ENCODE measurements at regions of chr1 and their contacts with region 1.

Region 1: DNA sequence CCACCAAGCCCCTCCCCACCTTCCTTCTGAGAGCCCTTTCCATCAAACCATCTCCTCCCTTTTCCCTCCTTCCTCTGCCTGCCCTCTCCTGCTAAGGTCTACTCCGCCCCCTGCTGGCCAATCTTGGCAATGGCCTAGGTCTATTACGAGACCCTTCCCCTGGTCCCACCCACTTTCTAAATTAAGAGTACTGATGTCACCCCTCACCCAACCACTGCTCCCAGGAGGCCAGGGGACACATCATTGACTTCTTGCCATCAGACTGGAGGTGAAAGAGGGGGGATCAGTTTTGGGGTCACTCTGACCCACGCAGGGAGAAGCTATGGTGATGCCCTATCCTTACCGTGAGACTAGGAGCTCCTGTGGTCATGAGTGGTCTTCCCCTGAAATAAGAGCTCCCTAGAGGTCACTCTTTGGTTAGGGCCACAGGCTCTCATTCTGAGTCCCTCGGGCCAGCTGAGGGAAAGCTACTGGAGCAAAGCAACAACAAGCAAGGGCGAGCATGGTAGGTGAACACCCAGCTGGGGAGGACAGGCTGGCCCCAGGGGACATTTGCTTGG is 34.6 kb upstream of the S100A7 start:
- DNase-seq: peak; percentile 79
- H3K4me3 ChIP-seq: no peak overlapping the region
- H3K27ac ChIP-seq: no peak overlapping the region
- H3K4me1 ChIP-seq: peaks cover 9% of the 10 kb centered on the region
- H3K27me3 ChIP-seq: peaks cover 12% of the 10 kb centered on the region
- CTCF ChIP-seq: peak; percentile 94

Region 2: DNA sequence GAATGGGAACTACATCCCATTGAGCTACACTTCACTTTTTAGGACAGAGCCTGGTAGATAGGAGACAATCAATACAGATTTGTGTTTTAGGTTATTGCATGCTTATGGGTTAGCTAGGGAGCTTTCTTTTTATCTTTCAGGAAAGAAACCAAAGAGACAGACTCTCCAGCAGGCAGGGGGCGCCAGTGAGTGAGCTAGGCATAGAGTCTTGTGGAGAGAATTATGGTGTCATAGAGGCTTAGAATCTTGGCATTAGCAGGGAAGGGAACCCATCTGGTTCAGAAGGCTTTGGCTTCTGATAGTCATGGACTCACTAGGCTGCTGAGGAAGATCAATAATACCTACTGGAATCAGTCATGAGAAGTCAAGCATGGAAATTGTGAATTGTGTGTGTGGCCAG is 617.0 kb before region 1 on chr1 and contains the start of gene SMCP:
- CTCF ChIA-PET with region 1: no interaction called
- POLR2A ChIA-PET with region 1: no interaction called
- intact Hi-C with region 1: no loop called
- DNase-seq: peak; percentile 46
- H3K4me3 ChIP-seq: no peak within 1 kb of the TSS
- H3K27ac ChIP-seq: no peak within 1 kb of the TSS
- H3K4me1 ChIP-seq: no peaks in the 10 kb centered on the region
- H3K27me3 ChIP-seq: no peaks in the 10 kb centered on the region
- CTCF ChIP-seq: peak; percentile 60
- total RNA-seq, gene SMCP: not detected in 2 replicates

Region 3: DNA sequence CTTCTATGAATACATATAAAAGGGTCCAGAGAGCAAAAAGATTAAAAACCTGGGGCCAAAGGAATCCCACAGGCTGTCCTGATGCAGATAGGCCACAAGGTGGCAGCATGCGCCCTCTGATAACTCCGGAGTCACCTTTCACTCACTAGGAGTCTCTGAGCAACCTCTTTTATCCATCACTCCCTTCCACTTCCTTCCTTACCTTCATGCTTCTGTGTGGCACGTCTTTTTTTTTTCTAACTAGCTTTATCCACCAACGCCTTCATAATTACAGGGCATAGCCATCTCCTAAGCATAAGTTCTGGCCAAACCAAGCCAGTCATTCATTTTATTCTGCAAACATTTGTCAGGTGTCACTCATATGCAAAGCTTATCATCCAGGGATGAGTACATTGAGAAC is 142.5 kb before region 1 on chr1:
- CTCF ChIA-PET with region 1: interaction called, 20 read pairs
- POLR2A ChIA-PET with region 1: no interaction called
- intact Hi-C with region 1: loop called (anchors 1 kb)
- DNase-seq: peak; percentile 72
- H3K4me3 ChIP-seq: no peak overlapping the region
- H3K27ac ChIP-seq: no peak overlapping the region
- H3K4me1 ChIP-seq: no peaks in the 10 kb centered on the region
- H3K27me3 ChIP-seq: peaks cover 53% of the 10 kb centered on the region
- CTCF ChIP-seq: peak; percentile 94

Region 4: DNA sequence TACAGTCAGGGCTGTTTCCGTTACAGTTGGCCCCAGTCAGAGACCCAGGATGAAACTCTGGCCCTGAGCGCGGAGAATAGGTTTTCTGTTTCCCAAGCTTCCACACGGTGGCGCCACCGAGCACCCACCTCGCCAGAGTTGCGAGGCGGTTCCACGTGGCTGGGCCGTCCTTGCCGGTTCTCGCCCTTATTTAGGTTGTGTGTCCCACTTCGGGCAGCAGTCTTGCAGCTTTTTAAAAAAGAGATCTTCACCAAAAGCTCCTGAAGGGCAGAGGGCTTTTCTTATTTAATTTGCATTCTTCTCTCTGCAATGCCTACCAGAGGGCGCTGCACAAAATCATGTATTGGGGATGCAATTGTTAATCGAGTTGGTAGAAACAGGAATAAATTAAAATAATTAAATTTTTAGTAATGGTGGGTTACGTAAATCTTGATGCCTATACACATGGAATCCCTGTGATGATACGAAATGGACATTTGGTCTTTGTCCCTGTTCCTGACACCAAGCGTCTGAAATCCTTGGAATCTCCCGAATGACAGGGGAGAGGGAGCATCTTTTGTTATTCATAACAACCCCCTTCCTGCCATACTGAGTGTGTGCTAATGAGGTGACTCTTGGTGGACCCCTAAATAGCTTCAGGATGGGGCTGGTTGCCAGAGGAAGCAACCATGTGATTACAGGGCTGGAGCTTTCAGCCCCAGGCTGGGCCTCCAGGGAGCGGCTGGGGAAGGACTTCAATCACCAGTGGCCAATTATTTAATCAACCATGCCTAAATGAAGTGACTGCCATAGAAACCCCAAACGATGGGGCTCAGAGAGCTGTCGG is 29.0 kb before region 1 on chr1:
- CTCF ChIA-PET with region 1: interaction called, 16 read pairs
- POLR2A ChIA-PET with region 1: no interaction called
- intact Hi-C with region 1: loop called (anchors 1 kb)
- DNase-seq: peak; percentile 67
- H3K4me3 ChIP-seq: no peak overlapping the region
- H3K27ac ChIP-seq: no peak overlapping the region
- H3K4me1 ChIP-seq: no peaks in the 10 kb centered on the region
- H3K27me3 ChIP-seq: peaks cover 52% of the 10 kb centered on the region
- CTCF ChIP-seq: peak; percentile 89

Measured in A673 (cell line).